ENCODE measurements at regions of chr3 and their contacts with region 1.

Region 1: GRCh38 chr3:49454458-49454857 is 15.6 kb upstream of the DAG1 start:
- DNase-seq: no peak
- ATAC-seq: no peak
- H3K4me3 Mint-ChIP-seq: no peak overlapping the region
- H3K27ac Mint-ChIP-seq: no peak overlapping the region
- H3K4me1 Mint-ChIP-seq: no peaks in the 10 kb centered on the region
- H3K27me3 Mint-ChIP-seq: no peaks in the 10 kb centered on the region
- CTCF ChIP-seq: no peak

Region 2: GRCh38 chr3:48989796-48990635 is 464.4 kb before region 1 on chr3 and contains the start of gene P4HTM:
- CTCF ChIA-PET with region 1: interaction called, 9 read pairs
- POLR2A ChIA-PET with region 1: interaction called, 3 read pairs
- intact Hi-C with region 1: loop called (anchors 1 kb)
- DNase-seq: peak; percentile 58
- ATAC-seq: peak; percentile 64
- H3K4me3 Mint-ChIP-seq: peak within 1 kb of the TSS; percentile 92
- H3K27ac Mint-ChIP-seq: peak within 1 kb of the TSS; percentile 83
- H3K4me1 Mint-ChIP-seq: peaks cover 28% of the 10 kb centered on the region
- H3K27me3 Mint-ChIP-seq: no peaks in the 10 kb centered on the region
- CTCF ChIP-seq: no peak
- total RNA-seq, gene P4HTM: 26.0 and 34.4 TPM in 2 replicates

Region 3: DNA sequence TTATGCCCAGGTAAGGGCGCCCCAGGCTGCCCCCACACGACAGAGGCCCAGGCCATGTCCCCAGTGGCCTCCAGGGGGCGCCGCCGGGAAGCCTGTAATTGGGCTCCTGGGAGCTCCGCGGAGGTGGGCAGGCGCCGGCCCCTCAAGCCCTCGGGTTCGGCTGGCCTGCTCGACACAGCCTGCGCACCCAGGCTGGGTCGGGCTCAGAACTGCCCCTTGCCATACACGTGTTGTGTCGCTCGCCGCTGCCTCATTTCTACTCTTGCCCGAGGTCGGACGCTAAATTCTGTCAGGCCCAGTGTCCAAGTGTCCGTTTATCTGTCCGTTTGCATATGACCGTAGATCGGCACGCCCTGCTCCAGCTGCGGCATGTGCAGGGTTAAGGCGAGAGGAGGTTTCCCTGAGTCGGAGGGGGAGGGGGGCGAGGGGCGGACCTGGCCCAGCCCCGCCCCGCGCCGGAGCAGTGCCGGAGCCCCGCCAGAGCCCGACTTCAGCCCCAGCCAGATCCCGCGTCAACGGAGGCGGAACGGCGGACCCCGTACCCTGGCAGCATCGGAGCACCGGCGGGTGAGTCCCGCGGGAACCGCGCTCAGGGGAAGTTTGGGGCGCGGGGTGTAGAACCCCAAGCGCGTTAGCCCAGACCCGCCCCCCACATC is 283.2 kb before region 1 on chr3 and contains the start of gene KLHDC8B:
- CTCF ChIA-PET with region 1: interaction called, 14 read pairs
- POLR2A ChIA-PET with region 1: interaction called, 6 read pairs
- intact Hi-C with region 1: loop called (anchors 1 kb)
- DNase-seq: peak; percentile 76
- ATAC-seq: peak; percentile 81
- H3K4me3 Mint-ChIP-seq: peak within 1 kb of the TSS; percentile 87
- H3K27ac Mint-ChIP-seq: peak within 1 kb of the TSS; percentile 35
- H3K4me1 Mint-ChIP-seq: peaks cover 12% of the 10 kb centered on the region
- H3K27me3 Mint-ChIP-seq: peaks cover 2% of the 10 kb centered on the region
- CTCF ChIP-seq: peak; percentile 79
- total RNA-seq, gene KLHDC8B: 1.1 and 1.2 TPM in 2 replicates

Region 4: DNA sequence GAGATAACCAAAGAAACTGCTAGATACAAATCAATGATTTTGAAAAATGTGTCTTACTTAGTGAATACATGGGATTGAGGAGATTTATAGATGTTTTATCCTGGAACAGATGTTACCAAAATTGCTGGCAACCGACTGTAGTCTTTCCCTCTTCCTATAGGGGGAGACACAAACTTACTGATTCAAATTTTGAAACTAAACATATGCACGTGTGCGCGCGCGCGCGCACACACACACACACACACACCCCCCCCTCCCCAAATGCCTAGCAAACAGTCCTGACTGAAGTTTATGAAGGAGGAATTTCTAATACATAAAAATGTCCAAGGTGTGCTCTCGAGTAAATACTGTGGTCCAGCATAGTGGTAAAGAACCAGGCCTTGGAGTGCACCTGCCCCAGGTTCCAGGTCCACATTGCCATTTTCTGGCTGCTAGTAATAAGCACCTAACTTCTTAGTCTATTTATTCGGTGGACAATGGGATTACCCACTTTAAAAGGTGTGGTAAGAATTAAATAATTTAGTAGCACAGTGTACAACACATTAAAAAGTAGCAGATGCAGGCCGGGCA is 158.9 kb before region 1 on chr3:
- CTCF ChIA-PET with region 1: interaction called, 12 read pairs
- POLR2A ChIA-PET with region 1: no interaction called
- intact Hi-C with region 1: loop called (anchors 1 kb)
- DNase-seq: no peak
- ATAC-seq: peak; percentile 65
- H3K4me3 Mint-ChIP-seq: no peak overlapping the region
- H3K27ac Mint-ChIP-seq: no peak overlapping the region
- H3K4me1 Mint-ChIP-seq: no peaks in the 10 kb centered on the region
- H3K27me3 Mint-ChIP-seq: no peaks in the 10 kb centered on the region
- CTCF ChIP-seq: no peak

Region 5: GRCh38 chr3:49327485-49327884 is 127.0 kb before region 1 on chr3:
- CTCF ChIA-PET with region 1: interaction called, 11 read pairs
- POLR2A ChIA-PET with region 1: no interaction called
- intact Hi-C with region 1: loop called (anchors 1 kb)
- DNase-seq: no peak
- ATAC-seq: no peak
- H3K4me3 Mint-ChIP-seq: no peak overlapping the region
- H3K27ac Mint-ChIP-seq: no peak overlapping the region
- H3K4me1 Mint-ChIP-seq: no peaks in the 10 kb centered on the region
- H3K27me3 Mint-ChIP-seq: no peaks in the 10 kb centered on the region
- CTCF ChIP-seq: no peak

Region 6: DNA sequence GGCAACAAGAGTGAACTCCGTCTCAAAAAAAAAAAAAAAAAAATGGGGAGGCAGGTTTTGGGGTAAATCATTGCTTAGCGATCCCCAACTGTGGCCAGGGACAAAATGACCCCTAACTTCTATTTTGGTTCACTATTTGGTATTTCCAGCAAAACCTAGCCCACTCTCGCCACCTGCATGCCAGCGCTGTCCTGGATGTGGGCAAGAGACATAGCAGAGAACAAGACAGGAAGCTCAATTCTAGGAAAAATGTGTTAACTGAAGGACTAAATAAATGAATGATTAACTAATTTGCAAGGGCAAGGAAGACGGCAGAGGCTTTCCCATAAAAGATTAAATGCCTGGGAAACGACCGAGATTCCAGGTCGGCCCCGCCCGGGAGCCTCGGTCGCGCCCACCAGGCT is 25.8 kb before region 1 on chr3:
- CTCF ChIA-PET with region 1: interaction called, 5 read pairs
- POLR2A ChIA-PET with region 1: interaction called, 7 read pairs
- intact Hi-C with region 1: loop called (anchors 1 kb)
- DNase-seq: no peak
- ATAC-seq: peak; percentile 1
- H3K4me3 Mint-ChIP-seq: peak overlapping the region; percentile 92
- H3K27ac Mint-ChIP-seq: peak overlapping the region; percentile 96
- H3K4me1 Mint-ChIP-seq: peaks cover 17% of the 10 kb centered on the region
- H3K27me3 Mint-ChIP-seq: no peaks in the 10 kb centered on the region
- CTCF ChIP-seq: no peak

Region 7: DNA sequence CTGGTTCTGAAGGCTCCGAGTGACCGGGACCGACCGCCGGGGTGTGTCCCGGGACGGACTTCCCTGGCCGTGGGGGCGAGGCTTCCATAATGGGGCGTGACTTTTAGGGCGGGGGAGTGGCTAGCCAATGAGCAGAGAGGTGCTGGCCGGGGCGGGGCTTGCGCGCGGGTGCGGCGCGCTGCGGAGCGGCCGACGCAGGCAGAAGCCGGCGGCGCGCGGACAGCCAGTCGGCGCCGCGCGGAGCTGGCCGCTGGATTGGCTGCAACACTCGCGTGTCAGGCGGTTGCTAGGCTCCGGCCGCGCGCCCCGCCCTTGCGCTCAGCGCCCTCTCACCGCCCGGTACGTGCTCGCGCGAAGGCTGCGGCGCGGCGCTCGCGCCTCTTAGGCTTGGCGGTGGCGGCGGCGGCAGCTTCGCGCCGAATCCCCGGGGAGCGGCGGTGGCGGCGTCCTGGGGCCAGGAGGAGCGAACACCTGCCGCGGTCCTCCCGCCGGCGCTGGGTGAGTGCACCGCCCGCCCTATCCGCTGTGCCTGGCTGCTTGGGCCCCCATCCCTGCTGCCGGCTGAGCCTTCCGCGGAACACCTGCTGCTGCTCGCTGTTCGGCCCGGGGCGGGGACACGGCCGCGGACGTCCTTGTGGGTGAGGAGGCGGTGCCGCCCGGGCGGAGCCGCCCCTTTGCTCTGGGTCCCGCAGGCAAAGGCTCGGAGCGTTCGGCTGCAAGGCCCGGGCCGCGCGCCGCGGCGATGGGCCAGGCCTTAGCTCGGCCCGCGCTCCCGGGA is 15.7 kb after region 1 on chr3 and contains the start of gene DAG1:
- CTCF ChIA-PET with region 1: interaction called, 13 read pairs
- POLR2A ChIA-PET with region 1: interaction called, 3 read pairs
- intact Hi-C with region 1: loop called (anchors 1 kb)
- DNase-seq: peak; percentile 97
- ATAC-seq: peak; percentile 87
- H3K4me3 Mint-ChIP-seq: peak within 1 kb of the TSS; percentile 91
- H3K27ac Mint-ChIP-seq: peak within 1 kb of the TSS; percentile 96
- H3K4me1 Mint-ChIP-seq: peaks cover 26% of the 10 kb centered on the region
- H3K27me3 Mint-ChIP-seq: no peaks in the 10 kb centered on the region
- CTCF ChIP-seq: no peak
- total RNA-seq, gene DAG1: 18.5 and 19.7 TPM in 2 replicates

Region 8: DNA sequence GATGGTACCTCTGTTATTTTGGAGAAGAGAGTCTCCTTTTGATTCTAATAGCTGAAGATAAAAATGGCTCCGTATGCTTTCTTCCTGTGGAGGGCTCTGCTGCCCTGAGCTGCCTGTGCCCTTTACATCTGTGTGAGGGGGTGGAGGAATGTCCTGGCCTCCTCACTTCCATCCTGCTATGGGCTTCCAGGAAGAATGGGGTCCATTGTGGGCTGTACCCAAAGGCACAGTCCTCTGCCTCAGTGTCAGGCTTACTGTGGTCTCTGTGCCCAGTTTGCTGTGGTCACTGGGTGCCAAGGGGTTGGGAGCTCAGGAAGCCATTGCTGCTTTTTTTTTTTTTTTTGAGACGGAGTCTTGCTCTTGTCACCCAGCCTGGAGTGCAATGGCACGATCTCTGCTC is 30.0 kb after region 1 on chr3:
- CTCF ChIA-PET with region 1: no interaction called
- POLR2A ChIA-PET with region 1: no interaction called
- intact Hi-C with region 1: no loop called
- DNase-seq: no peak
- ATAC-seq: no peak
- H3K4me3 Mint-ChIP-seq: no peak overlapping the region
- H3K27ac Mint-ChIP-seq: no peak overlapping the region
- H3K4me1 Mint-ChIP-seq: no peaks in the 10 kb centered on the region
- H3K27me3 Mint-ChIP-seq: no peaks in the 10 kb centered on the region
- CTCF ChIP-seq: no peak

Measured in activated B cell treated with CpG ODN at 0.5 μM for 24 hours (primary cell).